H1 (cell line): ENCODE measurements at regions of chr6 and their contacts with region 1.

Region 1: GRCh38 chr6:3977875-3978711 is 100.8 kb downstream of the FAM217A start:
- DNase-seq: no peak
- H3K4me3 ChIP-seq: no peak overlapping the region
- H3K27ac ChIP-seq: no peak overlapping the region
- H3K4me1 ChIP-seq: peaks cover 0 to 1% (median 0%) of the 10 kb centered on the region in 4 experiments; a peak in 1 of 7 replicates
- H3K27me3 ChIP-seq: no peaks in the 10 kb centered on the region
- CTCF ChIP-seq: peak; percentile 25 to 65 (median 51)
- EP300 ChIP-seq: no peak
- POLR2A ChIP-seq: no peak
- RAD21 ChIP-seq: peak; percentile 60 to 63

Region 2: DNA sequence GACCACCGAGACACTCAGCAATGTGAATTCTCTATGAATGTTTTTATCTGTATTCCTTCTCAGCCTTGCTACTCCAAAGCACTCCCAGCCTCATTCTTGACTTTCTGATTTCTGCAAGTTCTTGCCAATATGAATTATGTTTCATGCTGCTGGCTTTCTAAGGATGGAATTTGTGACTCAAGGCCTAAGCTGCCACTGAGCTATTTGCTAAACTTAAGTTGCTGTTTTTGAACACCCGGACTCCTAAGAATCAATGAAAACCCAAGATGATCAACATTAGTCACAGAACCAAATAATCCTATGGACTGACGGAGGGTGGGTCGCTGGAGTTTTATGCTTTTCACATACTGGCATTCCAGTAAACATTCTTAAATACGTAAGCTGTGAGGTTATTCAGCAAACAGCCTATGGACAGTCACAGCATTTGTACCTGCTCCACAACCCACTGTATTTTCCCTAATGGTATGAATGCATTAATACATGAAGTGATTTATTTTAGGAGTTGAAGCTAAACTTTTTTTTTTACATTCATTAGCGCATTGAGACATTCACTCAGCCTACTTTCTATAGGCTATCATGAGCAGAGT is 218.4 kb before region 1 on chr6:
- CTCF ChIA-PET with region 1: interaction called, 17 read pairs
- POLR2A ChIA-PET with region 1: no interaction called
- DNase-seq: no peak
- H3K4me3 ChIP-seq: no peak overlapping the region
- H3K27ac ChIP-seq: no peak overlapping the region
- H3K4me1 ChIP-seq: peaks cover 3 to 16% (median 7%) of the 10 kb centered on the region in 4 experiments; a peak in 6 of 7 replicates
- H3K27me3 ChIP-seq: no peaks in the 10 kb centered on the region; a peak in 2 of 7 replicates
- CTCF ChIP-seq: no peak
- EP300 ChIP-seq: no peak
- POLR2A ChIP-seq: no peak
- RAD21 ChIP-seq: no peak

Region 3: GRCh38 chr6:3887150-3887700 is 90.9 kb before region 1 on chr6:
- CTCF ChIA-PET with region 1: interaction called, 11 read pairs
- POLR2A ChIA-PET with region 1: no interaction called
- DNase-seq: no peak
- H3K4me3 ChIP-seq: no peak overlapping the region
- H3K27ac ChIP-seq: no peak overlapping the region
- H3K4me1 ChIP-seq: peaks cover 0 to 2% (median 0%) of the 10 kb centered on the region in 4 experiments; a peak in 1 of 7 replicates
- H3K27me3 ChIP-seq: no peaks in the 10 kb centered on the region
- CTCF ChIP-seq: no peak
- EP300 ChIP-seq: no peak
- POLR2A ChIP-seq: no peak
- RAD21 ChIP-seq: peak; percentile 39 to 47

Region 4: GRCh38 chr6:3943331-3943765 is 34.7 kb before region 1 on chr6:
- CTCF ChIA-PET with region 1: interaction called, 26 read pairs
- POLR2A ChIA-PET with region 1: interaction called, 5 read pairs
- DNase-seq: no peak
- H3K4me3 ChIP-seq: no peak overlapping the region
- H3K27ac ChIP-seq: no peak overlapping the region
- H3K4me1 ChIP-seq: no peaks in the 10 kb centered on the region; a peak in 1 of 7 replicates
- H3K27me3 ChIP-seq: no peaks in the 10 kb centered on the region
- CTCF ChIP-seq: no peak
- EP300 ChIP-seq: no peak
- POLR2A ChIP-seq: no peak
- RAD21 ChIP-seq: no peak

Region 5: DNA sequence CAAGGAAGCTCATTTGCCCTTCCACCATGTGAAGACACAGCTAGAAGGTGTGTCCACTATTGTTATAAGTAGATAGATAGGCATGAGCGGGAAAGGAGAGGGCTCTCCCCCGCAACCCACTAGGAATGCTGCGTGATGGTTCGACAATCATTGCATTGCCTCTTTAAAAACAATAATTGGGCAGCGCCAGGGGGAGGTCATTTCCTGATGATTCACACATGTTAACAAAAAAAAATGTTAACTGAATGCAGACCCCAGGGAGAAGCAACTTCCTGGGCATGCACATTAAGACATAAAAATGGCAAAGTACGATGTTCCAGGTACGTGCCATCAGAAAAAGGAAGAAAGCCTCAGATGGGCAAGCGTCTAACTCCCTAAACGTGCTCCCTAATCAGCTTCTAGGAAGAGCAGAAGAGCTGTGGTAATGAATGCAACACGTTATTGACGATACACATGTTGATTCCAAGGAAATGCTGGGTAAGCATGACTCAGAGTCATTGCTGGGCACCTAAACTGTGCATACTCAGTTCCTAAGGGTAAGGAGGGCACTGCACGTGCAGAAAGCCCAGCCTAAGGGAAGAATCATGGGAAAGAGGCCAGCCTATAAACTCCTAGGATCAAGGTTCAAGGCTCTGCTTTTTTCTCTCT is 12.9 kb before region 1 on chr6:
- CTCF ChIA-PET with region 1: interaction called, 24 read pairs
- POLR2A ChIA-PET with region 1: no interaction called
- DNase-seq: no peak
- H3K4me3 ChIP-seq: no peak overlapping the region
- H3K27ac ChIP-seq: no peak overlapping the region
- H3K4me1 ChIP-seq: no peaks in the 10 kb centered on the region
- H3K27me3 ChIP-seq: no peaks in the 10 kb centered on the region
- CTCF ChIP-seq: no peak
- EP300 ChIP-seq: no peak
- POLR2A ChIP-seq: no peak
- RAD21 ChIP-seq: no peak

Region 6: DNA sequence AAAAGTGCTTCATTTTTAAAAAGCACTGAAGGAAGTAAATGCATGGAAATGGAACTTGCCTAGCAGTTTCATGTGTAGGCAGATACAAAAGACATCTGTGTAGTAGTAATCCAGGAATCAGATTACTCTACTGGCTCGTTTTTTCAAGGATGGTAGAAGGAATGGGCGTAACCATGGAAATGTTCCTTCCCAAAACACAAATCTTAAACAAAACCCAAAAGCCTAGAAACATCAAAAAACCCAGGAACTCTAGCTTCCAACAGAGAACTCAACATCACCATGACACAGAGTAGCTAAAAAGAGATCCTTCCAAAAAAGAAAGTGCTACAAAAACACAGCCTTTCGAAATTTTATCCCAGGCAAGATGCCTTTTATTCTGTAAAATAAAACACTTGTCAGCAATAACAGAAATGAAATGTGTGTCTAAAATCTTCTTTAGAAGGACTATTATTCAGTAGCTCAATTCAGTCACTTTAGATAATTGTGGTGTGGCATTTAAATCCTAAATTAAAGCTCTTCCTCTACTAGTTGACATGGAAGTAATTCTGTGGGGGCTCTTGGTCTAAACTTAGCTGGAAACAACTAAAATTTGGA is 19.2 kb after region 1 on chr6:
- CTCF ChIA-PET with region 1: interaction called, 17 read pairs
- POLR2A ChIA-PET with region 1: no interaction called
- DNase-seq: no peak
- H3K4me3 ChIP-seq: no peak overlapping the region
- H3K27ac ChIP-seq: no peak overlapping the region
- H3K4me1 ChIP-seq: peaks cover 0 to 6% (median 1%) of the 10 kb centered on the region in 4 experiments; a peak in 1 of 7 replicates
- H3K27me3 ChIP-seq: no peaks in the 10 kb centered on the region
- CTCF ChIP-seq: no peak
- EP300 ChIP-seq: no peak
- POLR2A ChIP-seq: no peak
- RAD21 ChIP-seq: no peak